ENCODE measurements at regions of chr5 and their contacts with region 1.

Region 1: GRCh38 chr5:140632150-140633020 is 590 bp downstream of the CD14 start:
- DNase-seq: peak; percentile 58
- H3K4me3 Mint-ChIP-seq: peak overlapping the region; percentile 81
- H3K27ac Mint-ChIP-seq: peak overlapping the region; percentile 39
- H3K4me1 Mint-ChIP-seq: peaks cover 24% of the 10 kb centered on the region
- H3K27me3 Mint-ChIP-seq: peaks cover 14% of the 10 kb centered on the region
- CTCF ChIP-seq: no peak

Region 2: DNA sequence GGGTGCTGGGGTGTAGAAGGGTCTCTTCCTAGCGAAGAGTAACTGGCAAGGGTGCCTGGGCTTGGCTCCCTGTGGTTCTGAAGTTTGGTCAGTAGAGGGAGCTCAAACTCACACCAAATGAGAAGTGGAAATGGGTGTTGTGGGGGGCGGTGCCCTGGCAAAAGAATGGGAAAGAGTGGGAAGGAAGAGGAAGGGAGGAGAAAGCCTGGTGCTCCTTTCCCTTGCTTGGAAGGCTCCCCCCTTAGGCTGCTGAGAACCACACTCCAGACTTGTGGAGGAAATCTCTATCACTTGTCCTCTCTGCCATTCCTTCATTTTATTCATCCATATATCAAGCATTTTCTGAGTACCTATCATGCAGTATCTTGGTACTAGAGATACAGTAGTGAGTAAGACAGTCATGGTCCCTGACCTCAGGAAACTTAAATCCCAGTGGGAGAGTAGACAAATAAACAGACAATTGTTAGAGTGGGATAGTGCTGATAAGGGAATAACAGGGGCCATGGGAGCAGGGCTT is 259.4 kb before region 1 on chr5:
- CTCF ChIA-PET with region 1: interaction called, 3 read pairs
- intact Hi-C with region 1: loop called (anchors 2 kb)
- DNase-seq: peak; percentile 79
- H3K4me3 Mint-ChIP-seq: no peak overlapping the region
- H3K27ac Mint-ChIP-seq: peak overlapping the region; percentile 31
- H3K4me1 Mint-ChIP-seq: peaks cover 18% of the 10 kb centered on the region
- H3K27me3 Mint-ChIP-seq: no peaks in the 10 kb centered on the region
- CTCF ChIP-seq: peak; percentile 90

Region 3: DNA sequence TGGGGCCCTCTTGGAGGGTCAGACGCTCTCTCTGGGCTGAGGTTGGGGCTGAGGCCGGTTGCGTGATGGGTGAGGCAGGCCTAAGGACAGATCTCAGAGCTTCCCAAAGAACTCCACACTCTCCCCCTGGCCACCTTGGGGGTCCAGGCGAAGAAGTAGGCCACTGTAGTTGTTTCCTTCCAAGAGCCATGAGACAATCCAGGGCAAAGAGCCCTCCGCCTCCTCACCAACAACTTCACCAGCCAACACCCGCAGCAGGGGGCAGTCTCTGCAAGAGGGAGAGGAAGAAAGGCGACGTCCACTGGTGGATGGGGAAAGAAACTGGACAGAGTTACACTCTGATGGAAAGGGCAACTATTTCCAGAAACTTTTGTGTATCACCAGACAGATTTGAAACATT is 57.1 kb before region 1 on chr5:
- CTCF ChIA-PET with region 1: interaction called, 7 read pairs
- intact Hi-C with region 1: loop called (anchors 1 kb)
- DNase-seq: peak; percentile 66
- H3K4me3 Mint-ChIP-seq: no peak overlapping the region
- H3K27ac Mint-ChIP-seq: no peak overlapping the region
- H3K4me1 Mint-ChIP-seq: peaks cover 18% of the 10 kb centered on the region
- H3K27me3 Mint-ChIP-seq: no peaks in the 10 kb centered on the region
- CTCF ChIP-seq: no peak